ENCODE measurements at regions of chr6 and their contacts with region 1.

Region 1: GRCh38 chr6:2196079-2196679 is 49.2 kb downstream of the GMDS start:
- DNase-seq: no peak
- ATAC-seq: peak; percentile 69 to 72
- H3K4me3 ChIP-seq: no peak overlapping the region
- H3K27ac ChIP-seq: no peak overlapping the region
- H3K4me1 ChIP-seq: peaks cover 0 to 2% of the 10 kb centered on the region in 2 donors
- H3K27me3 ChIP-seq: no peaks in the 10 kb centered on the region
- CTCF ChIP-seq: peak; percentile 65 to 79 (median 70)
- POLR2A ChIP-seq: no peak

Region 2: DNA sequence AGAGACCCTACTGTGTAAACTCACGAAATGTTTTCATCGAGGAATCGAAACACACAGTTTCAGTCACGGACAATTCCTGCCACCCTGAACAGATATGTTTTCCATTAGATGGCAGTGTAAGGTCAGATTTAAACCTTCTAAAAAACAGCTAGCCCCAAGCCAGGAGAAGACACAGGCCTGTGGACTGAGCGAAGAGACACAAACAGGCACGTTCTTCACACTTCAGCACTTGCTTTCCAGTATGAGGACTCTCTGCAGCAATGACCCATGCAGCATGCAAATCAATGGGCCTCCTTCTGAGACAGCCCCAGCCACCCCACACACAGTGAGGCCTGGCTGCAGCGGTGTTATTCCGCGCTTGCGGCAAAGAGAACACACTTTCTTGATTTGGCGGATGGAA is 1571.2 kb before region 1 on chr6:
- in situ Hi-C with region 1: no loop called
- intact Hi-C with region 1: no loop called
- DNase-seq: no peak
- ATAC-seq: no peak
- H3K4me3 ChIP-seq: no peak overlapping the region
- H3K27ac ChIP-seq: no peak overlapping the region
- H3K4me1 ChIP-seq: peaks cover 0 to 7% of the 10 kb centered on the region in 2 donors
- H3K27me3 ChIP-seq: no peaks in the 10 kb centered on the region
- CTCF ChIP-seq: no peak
- POLR2A ChIP-seq: no peak

Region 3: DNA sequence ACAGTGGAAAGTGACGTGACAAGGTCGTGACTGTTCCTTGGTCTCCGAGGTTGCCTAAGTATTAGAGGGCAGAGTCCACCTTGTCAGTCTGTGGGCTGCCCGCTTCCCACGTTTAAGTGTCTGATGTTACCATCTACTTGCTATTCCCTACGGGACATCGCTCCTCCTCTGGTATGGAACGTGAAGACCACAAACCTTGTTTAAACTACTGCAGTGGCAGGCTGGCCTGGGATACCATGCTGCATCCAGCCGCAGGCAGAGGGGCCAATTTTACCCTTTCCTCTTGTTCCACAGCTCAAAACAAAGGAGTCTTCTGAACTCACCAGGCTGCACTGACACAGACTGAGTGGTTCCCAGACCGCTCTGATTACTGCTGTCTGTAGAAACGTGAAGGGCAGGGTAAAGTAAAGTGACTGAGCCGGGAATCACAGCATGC is 310.6 kb before region 1 on chr6:
- in situ Hi-C with region 1: no loop called
- intact Hi-C with region 1: no loop called
- DNase-seq: no peak
- ATAC-seq: no peak
- H3K4me3 ChIP-seq: no peak overlapping the region
- H3K27ac ChIP-seq: no peak overlapping the region
- H3K4me1 ChIP-seq: no peaks in the 10 kb centered on the region
- H3K27me3 ChIP-seq: no peaks in the 10 kb centered on the region
- CTCF ChIP-seq: no peak
- POLR2A ChIP-seq: no peak

Region 4: GRCh38 chr6:2055911-2056310 is 140.3 kb before region 1 on chr6:
- in situ Hi-C with region 1: no loop called
- intact Hi-C with region 1: no loop called
- DNase-seq: no peak
- ATAC-seq: no peak
- H3K4me3 ChIP-seq: no peak overlapping the region
- H3K27ac ChIP-seq: no peak overlapping the region
- H3K4me1 ChIP-seq: no peaks in the 10 kb centered on the region
- H3K27me3 ChIP-seq: no peaks in the 10 kb centered on the region
- CTCF ChIP-seq: no peak
- POLR2A ChIP-seq: no peak

Region 5: GRCh38 chr6:2353412-2354137 is 157.4 kb after region 1 on chr6:
- in situ Hi-C with region 1: no loop called
- intact Hi-C with region 1: loop called (anchors 10 kb)
- DNase-seq: peak; percentile 22 to 31
- ATAC-seq: no peak
- H3K4me3 ChIP-seq: no peak overlapping the region
- H3K27ac ChIP-seq: no peak overlapping the region
- H3K4me1 ChIP-seq: no peaks in the 10 kb centered on the region
- H3K27me3 ChIP-seq: no peaks in the 10 kb centered on the region
- CTCF ChIP-seq: peak; percentile 37 to 73 (median 56)
- POLR2A ChIP-seq: no peak